ENCODE measurements at regions of chr3 and their contacts with region 1.

Region 1: DNA sequence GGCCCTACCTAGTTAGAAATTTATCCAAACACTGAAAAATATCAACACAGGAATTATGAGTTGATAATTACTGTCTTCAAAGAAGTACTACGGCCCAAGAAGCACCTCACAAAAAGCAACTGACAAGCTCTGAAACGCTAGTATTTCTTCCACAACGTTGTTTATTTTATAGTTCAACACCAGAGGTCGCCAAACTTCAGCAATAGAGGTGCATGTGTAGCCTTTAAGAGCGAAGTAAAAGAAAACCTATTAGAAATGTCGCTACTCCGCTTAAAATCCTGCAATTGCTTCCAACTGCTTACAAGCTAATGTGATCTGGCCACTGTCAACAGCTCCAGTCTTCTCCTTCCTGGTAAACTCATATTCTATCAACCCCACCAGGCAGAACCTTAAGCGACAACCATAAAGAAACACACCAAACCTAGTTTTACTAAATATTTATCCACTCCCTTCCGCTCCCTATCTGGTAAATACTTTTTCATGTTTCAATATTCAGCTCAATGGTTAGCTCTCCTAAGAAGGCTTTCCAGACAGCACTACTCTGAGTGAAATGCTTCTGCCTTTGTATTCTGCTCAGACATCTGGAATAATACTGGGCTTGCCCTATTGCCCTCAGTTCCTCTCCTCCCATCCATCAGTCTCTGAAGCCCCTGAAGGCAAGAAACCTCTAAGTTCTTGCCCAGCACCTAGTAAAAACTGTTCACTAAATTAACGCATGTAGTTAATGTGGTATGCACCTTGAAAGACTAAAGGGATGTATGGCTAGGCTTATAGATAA is 110.2 kb downstream of the NR1I2 start:
- DNase-seq: peak in 1 of 2 donors; percentile 11
- ATAC-seq: peak; percentile 77 to 94
- H3K4me3 ChIP-seq: peak overlapping the region in 1 of 4 donors; percentile 4
- H3K27ac ChIP-seq: no peak overlapping the region
- H3K4me1 ChIP-seq: peaks cover 0 to 4% of the 10 kb centered on the region in 2 donors
- H3K27me3 ChIP-seq: no peaks in the 10 kb centered on the region
- CTCF ChIP-seq: peak; percentile 53 to 75 (median 67)
- POLR2A ChIP-seq: no peak

Region 2: GRCh38 chr3:119819806-119820205 is 72.3 kb before region 1 on chr3:
- in situ Hi-C with region 1: no loop called
- intact Hi-C with region 1: no loop called
- DNase-seq: no peak
- ATAC-seq: no peak
- H3K4me3 ChIP-seq: no peak overlapping the region
- H3K27ac ChIP-seq: no peak overlapping the region
- H3K4me1 ChIP-seq: no peaks in the 10 kb centered on the region
- H3K27me3 ChIP-seq: no peaks in the 10 kb centered on the region
- CTCF ChIP-seq: no peak
- POLR2A ChIP-seq: no peak

Region 3: DNA sequence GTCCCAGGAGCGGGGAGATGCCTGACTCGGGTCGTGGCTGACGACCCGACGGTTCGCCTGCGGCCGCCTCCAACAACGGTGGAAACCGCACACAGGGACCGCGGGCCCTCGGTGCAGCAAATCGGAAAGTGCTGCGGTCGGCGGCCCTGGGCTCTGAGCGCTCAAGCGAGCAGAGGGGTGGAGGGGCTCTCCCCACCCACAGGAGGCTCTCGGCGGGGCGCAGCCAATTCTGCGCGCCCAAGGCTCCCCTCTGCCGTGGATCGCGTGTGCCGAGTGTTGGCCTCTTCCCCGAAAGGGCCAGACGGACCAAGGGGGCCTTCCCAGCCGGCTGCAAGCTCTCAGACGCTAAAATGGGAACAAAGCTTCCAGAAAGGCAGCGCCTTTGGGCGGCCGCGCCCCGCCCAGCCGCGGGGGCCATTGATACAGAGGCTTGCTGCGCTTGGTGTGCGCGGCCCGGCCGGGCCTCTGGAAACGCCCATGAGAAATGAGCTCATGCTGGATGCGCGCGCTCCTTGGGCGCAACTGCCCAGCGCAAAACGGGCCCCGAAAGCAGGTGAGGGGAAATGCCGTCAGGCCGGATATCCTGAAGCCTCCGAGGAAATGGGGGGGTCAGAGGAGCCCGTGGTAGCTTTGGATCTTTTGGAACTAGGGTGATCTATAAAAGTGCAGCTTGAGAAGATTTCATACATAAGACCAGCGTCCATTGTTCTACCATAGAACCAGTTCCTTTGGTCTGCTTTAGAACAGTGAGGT is 203.3 kb after region 1 on chr3:
- in situ Hi-C with region 1: loop called in 1 of 4 experiments (anchors 25 kb)
- intact Hi-C with region 1: no loop called
- DNase-seq: peak; percentile 74 to 87
- ATAC-seq: peak; percentile 34 to 37
- H3K4me3 ChIP-seq: peak overlapping the region; percentile 65 to 94 (median 90)
- H3K27ac ChIP-seq: peak overlapping the region; percentile 90 to 99 (median 98)
- H3K4me1 ChIP-seq: peaks cover 20 to 31% of the 10 kb centered on the region in 2 donors
- H3K27me3 ChIP-seq: no peaks in the 10 kb centered on the region
- CTCF ChIP-seq: peak in 1 of 5 experiments; percentile 3
- POLR2A ChIP-seq: peak; percentile 81 to 92

Region 4: DNA sequence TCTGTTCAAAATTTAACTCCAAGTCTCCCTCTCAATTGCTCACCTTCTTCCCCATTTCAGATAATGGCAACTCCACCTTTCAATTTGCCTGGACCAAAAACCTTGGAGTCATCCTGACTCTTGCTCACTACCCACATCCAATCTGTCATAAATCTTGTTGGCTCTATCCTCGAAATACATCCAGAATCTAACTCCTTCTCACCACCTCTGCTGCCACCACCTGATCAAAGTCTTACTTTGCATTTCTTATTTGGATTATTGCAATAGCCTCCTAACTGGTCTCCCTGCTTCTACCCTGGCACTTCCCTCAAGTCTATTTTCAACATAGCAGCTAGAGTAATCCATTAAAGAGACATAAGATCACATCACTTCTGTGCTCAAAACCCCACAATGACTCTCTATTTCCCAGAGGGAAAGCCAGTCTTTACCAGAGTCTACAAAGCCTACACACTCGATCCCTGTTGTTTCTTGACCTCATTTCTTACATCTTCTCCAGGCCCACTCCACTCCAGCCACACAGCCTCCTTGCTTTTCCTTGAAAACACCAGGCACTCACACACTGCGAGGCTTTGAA is 306.3 kb after region 1 on chr3:
- in situ Hi-C with region 1: loop called in 3 of 4 experiments (anchors 25 kb)
- intact Hi-C with region 1: loop called (anchors 5 kb)
- DNase-seq: no peak
- ATAC-seq: peak in 1 of 2 donors; percentile 33
- H3K4me3 ChIP-seq: no peak overlapping the region
- H3K27ac ChIP-seq: no peak overlapping the region
- H3K4me1 ChIP-seq: peaks cover 13 to 33% of the 10 kb centered on the region in 2 donors
- H3K27me3 ChIP-seq: no peaks in the 10 kb centered on the region
- CTCF ChIP-seq: peak in 1 of 5 experiments; percentile 16
- POLR2A ChIP-seq: no peak

Region 5: GRCh38 chr3:120417272-120417911 is 525.3 kb after region 1 on chr3:
- in situ Hi-C with region 1: loop called in 2 of 4 experiments (anchors 25 kb)
- intact Hi-C with region 1: loop called (anchors 1 kb)
- DNase-seq: peak; percentile 82 to 91
- ATAC-seq: peak; percentile 99
- H3K4me3 ChIP-seq: peak overlapping the region; percentile 31 to 54 (median 46)
- H3K27ac ChIP-seq: peak overlapping the region; percentile 21 to 68 (median 58)
- H3K4me1 ChIP-seq: peaks cover 34 to 41% of the 10 kb centered on the region in 2 donors
- H3K27me3 ChIP-seq: no peaks in the 10 kb centered on the region
- CTCF ChIP-seq: peak; percentile 82 to 92 (median 86)
- POLR2A ChIP-seq: peak in 1 of 2 donors; percentile 52

Measured in gastrocnemius medialis (tissue), 4 donors.